ENCODE measurements at regions of chr19 and their contacts with region 1.

Region 1: DNA sequence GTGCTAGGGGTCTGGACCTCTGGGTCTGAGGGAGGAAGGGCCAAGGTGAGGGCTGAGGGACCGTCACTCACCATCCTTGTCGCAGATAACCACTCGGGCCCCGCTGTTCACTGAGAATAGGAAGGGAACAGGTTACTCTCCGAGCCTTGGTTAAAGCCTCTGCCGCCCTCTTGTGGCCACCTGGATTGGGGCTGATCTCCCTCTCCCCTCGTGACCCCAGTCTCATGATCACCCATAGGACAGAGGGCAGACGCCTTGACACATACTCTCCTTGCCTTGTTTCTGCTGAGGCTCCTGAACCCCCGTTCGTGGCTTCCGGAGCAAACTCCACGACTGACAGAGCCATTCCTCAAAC is 580 bp downstream of the HSD17B14 start:
- DNase-seq: peak; percentile 94
- H3K4me3 ChIP-seq: peak overlapping the region; percentile 66
- H3K27ac ChIP-seq: peak overlapping the region; percentile 37
- H3K4me1 ChIP-seq: peaks cover 20% of the 10 kb centered on the region
- CTCF ChIP-seq: peak; percentile 89

Region 2: GRCh38 chr19:48760504-48761205 is 75.1 kb before region 1 on chr19:
- CTCF ChIA-PET with region 1: no interaction called
- POLR2A ChIA-PET with region 1: no interaction called
- intact Hi-C with region 1: no loop called
- DNase-seq: no peak
- H3K4me3 ChIP-seq: no peak overlapping the region
- H3K27ac ChIP-seq: no peak overlapping the region
- H3K4me1 ChIP-seq: peaks cover 5% of the 10 kb centered on the region
- CTCF ChIP-seq: no peak

Region 3: GRCh38 chr19:48784540-48784939 is 51.2 kb before region 1 on chr19:
- CTCF ChIA-PET with region 1: no interaction called
- POLR2A ChIA-PET with region 1: interaction called, 4 read pairs
- intact Hi-C with region 1: loop called (anchors 1 kb)
- DNase-seq: no peak
- H3K4me3 ChIP-seq: no peak overlapping the region
- H3K27ac ChIP-seq: no peak overlapping the region
- H3K4me1 ChIP-seq: peaks cover 7% of the 10 kb centered on the region
- CTCF ChIP-seq: no peak

Region 4: DNA sequence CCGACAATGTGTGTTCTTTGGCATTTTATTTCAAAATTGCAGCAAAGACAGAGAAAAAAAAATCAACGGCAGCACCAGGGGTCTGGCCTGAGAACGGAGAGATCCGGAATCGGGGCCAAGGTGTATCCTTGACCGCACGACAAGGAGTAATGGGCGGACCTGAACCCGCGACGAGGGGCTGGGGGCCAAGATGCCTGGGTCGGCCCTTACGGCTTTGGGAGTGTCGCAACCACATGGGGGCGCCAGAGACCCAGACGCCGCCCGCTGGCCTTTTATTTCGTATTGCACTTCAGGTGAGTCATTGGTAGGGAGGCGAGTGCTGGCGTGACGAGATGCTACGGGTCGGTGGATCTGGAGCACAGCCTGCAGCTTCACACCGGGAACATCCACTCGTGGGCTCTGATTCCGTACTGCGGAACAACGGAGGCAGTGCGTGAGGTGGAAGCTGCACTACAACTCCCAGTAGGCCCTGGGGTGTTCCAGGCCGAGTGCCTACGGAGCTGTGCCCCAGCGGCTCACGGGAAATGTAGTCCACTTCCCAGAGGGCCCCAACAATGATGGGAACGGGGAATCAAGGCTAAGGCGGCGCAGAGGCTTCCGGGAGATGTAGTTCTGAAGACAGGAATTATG is 40.5 kb before region 1 on chr19:
- CTCF ChIA-PET with region 1: interaction called, 5 read pairs
- POLR2A ChIA-PET with region 1: interaction called, 6 read pairs
- intact Hi-C with region 1: loop called (anchors 1 kb)
- DNase-seq: peak; percentile 93
- H3K4me3 ChIP-seq: peak overlapping the region; percentile 68
- H3K27ac ChIP-seq: no peak overlapping the region
- H3K4me1 ChIP-seq: peaks cover 5% of the 10 kb centered on the region
- CTCF ChIP-seq: peak; percentile 99

Region 5: GRCh38 chr19:48806518-48806817 is 29.2 kb before region 1 on chr19:
- CTCF ChIA-PET with region 1: no interaction called
- POLR2A ChIA-PET with region 1: no interaction called
- intact Hi-C with region 1: no loop called
- DNase-seq: no peak
- H3K4me3 ChIP-seq: no peak overlapping the region
- H3K27ac ChIP-seq: no peak overlapping the region
- H3K4me1 ChIP-seq: peaks cover 11% of the 10 kb centered on the region
- CTCF ChIP-seq: no peak

Region 6: DNA sequence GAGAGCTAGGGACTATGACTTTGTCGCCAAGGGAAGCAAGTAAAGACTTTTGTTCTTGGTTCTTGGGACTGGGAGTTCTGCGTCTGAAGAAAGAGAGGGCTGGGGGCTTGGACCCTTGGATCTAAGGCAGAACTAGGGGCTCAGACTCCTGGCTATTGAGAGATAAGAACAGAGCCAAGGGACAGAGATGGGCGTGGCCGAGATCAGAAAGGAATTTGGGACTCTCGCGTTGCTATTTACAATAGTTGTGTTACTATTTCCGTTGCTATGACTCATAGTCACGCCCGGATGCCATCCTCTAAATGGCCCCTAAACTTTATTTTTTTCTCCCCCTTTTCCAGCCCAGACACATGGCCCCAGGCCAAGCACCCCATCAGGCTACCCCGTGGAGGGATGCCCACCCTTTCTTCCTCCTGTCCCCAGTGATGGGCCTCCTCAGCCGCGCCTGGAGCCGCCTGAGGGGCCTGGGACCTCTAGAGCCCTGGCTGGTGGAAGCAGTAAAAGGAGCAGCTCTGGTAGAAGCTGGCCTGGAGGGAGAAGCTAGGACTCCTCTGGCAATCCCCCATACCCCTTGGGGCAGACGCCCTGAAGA is 37.3 kb after region 1 on chr19:
- CTCF ChIA-PET with region 1: no interaction called
- POLR2A ChIA-PET with region 1: no interaction called
- intact Hi-C with region 1: no loop called
- DNase-seq: peak; percentile 89
- H3K4me3 ChIP-seq: peak overlapping the region; percentile 84
- H3K27ac ChIP-seq: peak overlapping the region; percentile 99
- H3K4me1 ChIP-seq: peaks cover 59% of the 10 kb centered on the region
- CTCF ChIP-seq: no peak

Region 7: GRCh38 chr19:48970923-48971395 is 135.2 kb after region 1 on chr19:
- CTCF ChIA-PET with region 1: interaction called, 3 read pairs
- POLR2A ChIA-PET with region 1: no interaction called
- intact Hi-C with region 1: loop called (anchors 1 kb)
- DNase-seq: peak; percentile 90
- H3K4me3 ChIP-seq: no peak overlapping the region
- H3K27ac ChIP-seq: no peak overlapping the region
- H3K4me1 ChIP-seq: peaks cover 41% of the 10 kb centered on the region
- CTCF ChIP-seq: peak; percentile 96

Measured in OCI-LY7 (cell line).